AG04449 (cell line): ENCODE measurements at regions of chr3 and their contacts with region 1.

Region 1: DNA sequence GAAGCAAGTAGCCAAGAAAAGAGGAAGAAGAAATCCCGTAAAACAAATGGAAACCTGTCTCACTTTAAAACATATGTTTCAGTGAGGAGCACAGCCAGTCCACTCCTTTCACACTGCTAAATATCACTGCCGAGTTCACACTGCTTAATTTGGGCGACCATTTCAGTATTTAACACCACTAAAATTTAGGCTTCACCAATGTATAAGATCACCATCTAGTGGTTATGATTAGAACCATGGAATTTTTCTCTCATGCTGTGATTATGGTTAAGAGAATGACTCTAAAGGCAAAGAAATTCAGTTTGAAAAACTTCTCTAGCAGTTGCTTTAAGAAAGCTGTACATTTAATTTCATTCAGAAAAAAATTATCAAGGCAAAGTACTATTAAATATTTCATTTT is 16.6 kb downstream of the SLC4A7 start:
- DNase-seq: no peak
- H3K4me3 ChIP-seq: no peak overlapping the region
- CTCF ChIP-seq: peak; percentile 36

Region 2: DNA sequence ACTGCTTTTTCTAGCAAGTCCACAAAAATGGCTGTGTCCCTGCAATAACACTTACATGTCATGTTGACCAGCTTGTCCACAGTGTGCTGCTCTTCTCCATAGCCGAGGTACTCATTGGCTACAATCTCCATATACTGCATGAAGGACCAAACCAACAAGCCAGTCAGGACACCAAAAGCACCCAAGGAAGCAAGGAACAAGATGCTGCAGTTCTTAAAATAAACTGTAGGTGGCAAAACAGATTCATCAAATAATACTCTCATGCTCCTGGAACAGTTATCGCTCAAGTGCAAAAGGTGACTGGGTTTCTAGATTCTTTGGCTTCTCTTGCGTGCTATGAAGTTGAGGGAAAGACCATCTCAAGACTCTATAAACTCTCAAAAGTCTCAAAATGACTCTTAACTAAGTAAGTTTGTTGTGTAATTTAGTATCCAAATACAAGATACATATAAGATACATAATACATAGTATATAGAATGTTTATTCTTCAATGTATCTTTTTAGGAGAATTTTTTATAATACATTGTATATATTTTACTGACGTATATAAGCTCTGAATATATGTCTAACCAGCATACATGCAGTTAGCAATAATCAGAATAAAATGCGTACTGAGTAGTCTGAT is 155.4 kb before region 1 on chr3:
- CTCF ChIA-PET with region 1: interaction called, 13 read pairs
- POLR2A ChIA-PET with region 1: no interaction called
- DNase-seq: peak; percentile 46
- H3K4me3 ChIP-seq: no peak overlapping the region
- CTCF ChIP-seq: peak; percentile 54

Region 3: GRCh38 chr3:27415202-27415601 is 52.3 kb before region 1 on chr3:
- CTCF ChIA-PET with region 1: no interaction called
- POLR2A ChIA-PET with region 1: no interaction called
- DNase-seq: no peak
- H3K4me3 ChIP-seq: no peak overlapping the region
- CTCF ChIP-seq: no peak

Region 4: GRCh38 chr3:27431116-27431515 is 36.4 kb before region 1 on chr3:
- CTCF ChIA-PET with region 1: interaction called, 11 read pairs
- POLR2A ChIA-PET with region 1: no interaction called
- DNase-seq: peak; percentile 99
- H3K4me3 ChIP-seq: no peak overlapping the region
- CTCF ChIP-seq: no peak

Region 5: GRCh38 chr3:27454914-27455313 is 12.6 kb before region 1 on chr3:
- CTCF ChIA-PET with region 1: interaction called, 10 read pairs
- POLR2A ChIA-PET with region 1: no interaction called
- DNase-seq: no peak
- H3K4me3 ChIP-seq: no peak overlapping the region
- CTCF ChIP-seq: no peak